ENCODE measurements at regions of chr3 and their contacts with region 1.

Region 1: DNA sequence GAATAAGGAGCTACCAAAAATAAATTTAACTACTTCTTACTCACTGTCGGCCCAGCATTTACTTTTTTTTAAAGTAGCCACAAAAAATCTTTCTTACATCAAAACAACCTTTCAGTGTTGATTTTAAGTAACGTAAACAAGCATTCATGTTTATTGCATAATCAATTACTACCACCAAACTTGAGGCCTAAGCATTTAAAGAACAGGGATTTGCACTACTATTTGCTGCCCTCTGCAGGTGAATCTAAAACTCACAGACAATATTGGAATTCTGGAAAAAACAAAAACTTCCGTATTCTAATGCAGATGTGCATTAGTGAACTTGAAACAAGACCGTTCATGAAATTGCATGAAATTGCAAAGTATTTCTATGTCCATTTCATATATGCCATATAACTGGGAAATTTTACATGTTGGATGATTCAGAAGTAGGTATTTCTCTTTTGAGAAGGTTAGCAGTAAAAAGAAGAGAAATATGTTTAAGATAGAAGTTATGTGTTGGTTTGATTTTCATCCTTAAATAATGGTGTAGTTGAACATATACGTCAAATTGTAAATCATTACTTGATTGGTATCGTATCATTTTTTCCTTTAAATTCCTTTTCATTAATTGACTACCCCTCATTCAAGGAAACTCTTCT is 55.6 kb downstream of the CGGBP1 start:
- DNase-seq: no peak

Region 2: DNA sequence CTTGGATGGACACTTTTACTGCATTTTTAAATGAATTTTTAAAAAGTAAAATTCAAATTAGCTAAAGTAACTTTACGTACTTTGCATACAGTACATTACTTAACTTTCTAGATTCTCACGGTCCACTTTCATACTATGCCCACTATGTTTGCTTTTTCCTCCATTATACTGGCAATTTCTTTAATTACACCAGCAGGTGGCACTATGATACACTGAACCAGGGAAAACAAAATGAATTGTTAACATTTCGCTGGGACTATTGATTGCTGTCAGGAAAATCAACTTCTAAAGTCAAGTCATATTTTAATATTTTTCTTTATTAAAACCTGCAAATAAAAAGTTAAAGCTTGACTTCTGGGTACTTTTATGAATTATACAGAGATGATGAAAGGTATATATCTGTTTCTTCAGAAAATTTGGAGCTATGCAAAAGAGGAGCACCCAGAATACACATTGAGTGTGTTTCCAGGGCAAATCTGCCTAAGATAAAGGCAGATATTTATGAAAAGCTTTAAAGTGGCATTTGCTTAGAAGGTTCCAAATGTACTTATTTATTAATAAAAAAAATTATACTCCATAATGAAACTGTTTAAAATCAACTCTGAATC is 705.0 kb before region 1 on chr3:
- intact Hi-C with region 1: loop called (anchors 5 kb)
- DNase-seq: no peak

Region 3: DNA sequence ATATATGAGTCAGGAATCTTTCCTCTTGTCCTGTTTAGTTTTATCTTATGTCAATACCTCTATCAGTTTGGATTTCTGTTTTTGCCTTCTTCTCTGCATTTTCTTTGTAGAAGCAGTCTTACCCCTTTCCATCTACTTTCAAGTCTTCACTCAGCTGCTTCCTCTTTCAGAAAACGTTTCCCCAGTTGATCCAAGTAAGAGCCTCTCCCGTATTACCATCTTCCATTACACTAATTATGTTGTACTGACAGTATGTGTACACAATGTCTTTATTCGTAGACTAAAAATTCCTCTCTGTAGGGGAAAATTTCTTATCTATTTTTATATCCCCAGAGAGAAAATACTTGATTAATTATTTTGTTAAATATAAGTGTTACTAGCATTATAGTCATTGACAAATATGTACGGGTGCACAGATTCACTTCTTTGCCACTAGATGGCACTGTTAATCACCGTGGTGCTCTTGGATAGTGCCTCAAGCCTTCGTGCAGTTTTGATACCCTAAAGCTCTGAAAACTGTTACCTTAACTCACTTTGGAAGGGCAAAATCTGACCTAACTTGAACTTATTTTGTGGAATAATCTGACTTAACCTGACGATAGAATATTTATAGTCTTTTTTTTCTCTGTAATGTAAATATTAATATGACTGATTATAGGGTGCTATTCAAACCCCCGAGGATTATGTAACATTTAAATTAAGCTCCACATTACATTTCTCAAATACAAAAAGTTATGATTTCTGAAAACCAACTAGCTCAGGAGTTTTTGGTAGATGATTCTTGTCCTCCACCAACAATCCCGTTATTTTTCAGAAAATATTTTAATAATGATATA is 652.7 kb before region 1 on chr3:
- intact Hi-C with region 1: loop called (anchors 5 kb)
- DNase-seq: no peak

Region 4: GRCh38 chr3:87771341-87772192 is 231.7 kb before region 1 on chr3:
- intact Hi-C with region 1: loop called (anchors 10 kb)
- DNase-seq: peak; percentile 70

Region 5: DNA sequence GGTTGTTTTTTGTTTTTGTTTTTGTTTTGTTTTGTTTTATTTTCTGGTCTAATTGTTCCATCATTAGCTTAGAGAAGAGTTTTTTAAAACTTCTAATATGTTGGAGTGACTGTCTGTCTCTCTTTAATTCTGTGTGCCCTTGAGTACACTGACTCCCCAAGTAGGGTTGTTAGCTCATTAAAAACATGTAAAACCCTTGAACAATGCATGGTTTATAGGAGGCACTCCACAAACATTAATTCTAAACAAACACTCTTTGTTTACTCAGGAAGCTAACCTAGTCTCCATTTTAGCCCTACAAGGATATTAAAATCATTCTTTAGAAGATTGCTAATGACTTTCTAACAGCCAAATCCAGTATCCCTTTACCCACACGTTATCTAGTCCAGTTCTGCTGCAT is 44.9 kb before region 1 on chr3:
- intact Hi-C with region 1: no loop called
- DNase-seq: no peak

Region 6: GRCh38 chr3:88031642-88032077 is 28.4 kb after region 1 on chr3:
- intact Hi-C with region 1: no loop called
- DNase-seq: no peak

Region 7: DNA sequence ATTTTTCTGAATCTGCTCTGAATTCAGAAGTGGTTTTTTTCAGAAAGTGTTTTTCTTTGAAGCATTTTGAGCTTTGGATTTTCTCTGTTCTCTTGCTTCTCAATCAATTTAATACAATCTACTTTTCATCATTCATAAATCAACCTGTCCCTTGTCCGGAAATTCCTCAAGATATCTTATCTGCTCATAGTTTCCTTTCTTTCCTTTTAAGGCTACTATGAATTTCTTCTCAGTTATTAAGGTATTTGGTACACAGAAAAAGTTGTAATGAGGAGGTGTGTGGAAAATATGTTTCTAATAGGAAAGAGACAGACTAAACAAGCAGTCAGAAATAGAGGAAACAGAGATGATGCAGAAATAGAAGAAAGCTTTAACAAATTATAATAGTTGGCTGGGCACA is 41.2 kb after region 1 on chr3:
- intact Hi-C with region 1: loop called (anchors 2 kb)
- DNase-seq: no peak

Region 8: DNA sequence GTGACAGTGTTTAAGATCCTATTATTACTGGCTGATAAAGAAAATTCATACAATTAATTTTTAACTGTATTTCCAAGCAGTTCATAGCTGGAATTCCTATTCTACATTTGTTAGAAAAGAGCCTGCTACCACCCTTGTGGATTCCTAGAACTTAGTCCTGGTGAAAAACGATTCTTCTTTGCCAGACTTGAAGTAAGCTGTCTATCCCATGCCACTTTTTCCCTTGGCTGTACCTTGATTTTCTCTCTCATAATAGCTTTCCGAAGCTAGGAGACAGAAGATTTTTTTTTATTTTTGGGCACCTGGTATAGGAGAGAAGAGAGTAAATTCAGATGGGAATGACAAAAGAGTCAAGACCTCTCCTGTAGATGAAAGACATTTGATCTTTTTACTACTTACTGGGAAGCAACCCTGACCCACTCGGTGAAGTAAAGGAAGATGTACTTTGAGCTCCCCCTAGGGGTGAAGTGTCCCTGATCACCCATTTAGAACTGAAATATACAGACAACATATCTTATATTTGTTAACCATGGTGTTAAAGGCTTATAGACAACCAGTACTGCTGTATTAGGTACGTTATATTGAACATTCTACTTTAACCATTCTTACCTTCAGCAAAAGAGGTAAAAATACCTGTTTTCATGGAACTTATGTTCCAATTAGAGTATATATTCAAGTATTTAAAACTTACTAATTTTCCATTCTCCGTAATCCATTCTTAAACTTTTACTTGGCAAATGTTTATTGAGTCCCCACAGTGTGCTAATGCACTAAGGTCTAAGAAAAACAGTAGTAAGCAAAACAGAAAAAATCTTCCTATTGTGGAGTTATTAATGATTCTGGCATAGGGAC is 110.3 kb after region 1 on chr3:
- intact Hi-C with region 1: loop called (anchors 5 kb)
- DNase-seq: no peak

Region 9: DNA sequence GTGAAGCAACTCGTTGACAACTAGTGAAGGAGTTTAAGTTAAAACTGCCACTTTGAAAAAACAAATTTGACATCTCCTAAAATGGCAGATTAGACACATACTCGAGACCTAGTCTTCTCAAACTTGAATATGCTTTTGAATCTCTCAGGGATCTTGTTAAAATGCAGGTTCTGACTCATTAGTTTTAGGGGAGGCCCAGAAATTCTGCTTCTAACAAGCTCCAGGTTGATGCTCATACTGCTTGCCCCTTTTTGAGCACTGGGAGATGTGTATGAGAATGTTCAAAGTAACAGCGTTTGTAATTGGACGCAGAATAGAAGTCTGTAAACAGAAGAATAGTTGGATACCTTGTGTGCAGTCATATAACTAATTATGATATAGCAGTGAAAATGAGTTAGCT is 148.1 kb after region 1 on chr3:
- intact Hi-C with region 1: no loop called
- DNase-seq: no peak

Region 10: GRCh38 chr3:89165636-89166263 is 1162.5 kb after region 1 on chr3:
- intact Hi-C with region 1: no loop called
- DNase-seq: no peak

Measured in cardiac septum (tissue), 1 donor.